ENCODE measurements at regions of chr12 and their contacts with region 1.

Region 1: GRCh38 chr12:40152783-40153383 is 47.0 kb upstream of the SLC2A13 start:
- DNase-seq: peak; percentile 60
- H3K4me3 Mint-ChIP-seq: no peak overlapping the region
- H3K27ac Mint-ChIP-seq: no peak overlapping the region
- H3K4me1 Mint-ChIP-seq: no peaks in the 10 kb centered on the region
- H3K27me3 Mint-ChIP-seq: peaks cover 18% of the 10 kb centered on the region

Region 2: GRCh38 chr12:39935275-39935674 is 217.6 kb before region 1 on chr12:
- CTCF ChIA-PET with region 1: no interaction called
- POLR2A ChIA-PET with region 1: no interaction called
- intact Hi-C with region 1: no loop called
- DNase-seq: no peak
- H3K4me3 Mint-ChIP-seq: no peak overlapping the region
- H3K27ac Mint-ChIP-seq: no peak overlapping the region
- H3K4me1 Mint-ChIP-seq: no peaks in the 10 kb centered on the region
- H3K27me3 Mint-ChIP-seq: no peaks in the 10 kb centered on the region

Region 3: GRCh38 chr12:40202095-40203059 is 49.5 kb after region 1 on chr12:
- CTCF ChIA-PET with region 1: no interaction called
- POLR2A ChIA-PET with region 1: no interaction called
- intact Hi-C with region 1: no loop called
- DNase-seq: no peak
- H3K4me3 Mint-ChIP-seq: no peak overlapping the region
- H3K27ac Mint-ChIP-seq: no peak overlapping the region
- H3K4me1 Mint-ChIP-seq: no peaks in the 10 kb centered on the region
- H3K27me3 Mint-ChIP-seq: peaks cover 6% of the 10 kb centered on the region

Region 4: GRCh38 chr12:40224439-40225291 is 71.8 kb after region 1 on chr12 and contains the start of gene LRRK2:
- CTCF ChIA-PET with region 1: no interaction called
- POLR2A ChIA-PET with region 1: no interaction called
- intact Hi-C with region 1: loop called (anchors 5 kb)
- DNase-seq: peak; percentile 49
- H3K4me3 Mint-ChIP-seq: peak within 1 kb of the TSS; percentile 44
- H3K27ac Mint-ChIP-seq: no peak within 1 kb of the TSS
- H3K4me1 Mint-ChIP-seq: peaks cover 11% of the 10 kb centered on the region
- H3K27me3 Mint-ChIP-seq: peaks cover 32% of the 10 kb centered on the region
- total RNA-seq, gene LRRK2: 0.21 TPM in 1 of 2 experiments, not detected in the other

Region 5: GRCh38 chr12:41645624-41646023 is 1492.7 kb after region 1 on chr12:
- CTCF ChIA-PET with region 1: no interaction called
- POLR2A ChIA-PET with region 1: no interaction called
- intact Hi-C with region 1: no loop called
- DNase-seq: no peak
- H3K4me3 Mint-ChIP-seq: no peak overlapping the region
- H3K27ac Mint-ChIP-seq: no peak overlapping the region
- H3K4me1 Mint-ChIP-seq: no peaks in the 10 kb centered on the region
- H3K27me3 Mint-ChIP-seq: no peaks in the 10 kb centered on the region

Measured in activated CD4-positive, alpha-beta memory T cell treated with anti-CD3 and anti-CD28 coated beads for 36 hours (primary cell).